B cell (primary cell): ENCODE measurements at regions of chrX and their contacts with region 1.

Region 1: GRCh38 chrX:101595739-101596419 is 21.9 kb downstream of the ARMCX6 start:
- DNase-seq: peak; percentile 73
- ATAC-seq: peak; percentile 80
- H3K4me3 ChIP-seq: no peak overlapping the region
- H3K4me3 Mint-ChIP-seq: no peak overlapping the region
- H3K27ac ChIP-seq: no peak overlapping the region
- H3K27ac Mint-ChIP-seq: peak overlapping the region; percentile 46
- H3K4me1 ChIP-seq: no peaks in the 10 kb centered on the region
- H3K4me1 Mint-ChIP-seq: peaks cover 4% of the 10 kb centered on the region
- H3K27me3 ChIP-seq: peaks cover 0 to 4% (median 2%) of the 10 kb centered on the region in 4 experiments
- H3K27me3 Mint-ChIP-seq: peaks cover 11% of the 10 kb centered on the region
- CTCF ChIP-seq: peak; percentile 71

Region 2: DNA sequence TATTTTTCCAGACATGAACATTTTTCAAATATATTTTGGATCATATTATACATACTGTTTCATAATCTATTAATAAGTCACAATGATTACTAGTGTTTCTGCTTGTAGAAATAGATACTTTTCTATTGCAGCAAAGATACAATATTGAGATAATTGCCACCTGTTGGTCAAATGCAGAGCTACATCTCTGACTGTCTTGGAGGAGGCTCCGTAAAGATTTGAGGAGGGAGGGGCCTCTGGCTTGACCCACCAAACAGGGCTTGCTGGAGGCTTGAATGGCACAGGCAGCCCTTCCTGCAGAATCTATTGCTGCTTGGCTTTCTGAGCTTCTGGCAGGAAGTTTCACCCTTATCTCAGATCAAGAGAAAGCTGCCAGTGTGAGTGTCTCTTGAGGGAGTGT is 163.1 kb after region 1 on chrX:
- CTCF ChIA-PET with region 1: interaction called, 12 read pairs
- POLR2A ChIA-PET with region 1: no interaction called
- intact Hi-C with region 1: loop called (anchors 5 kb)
- DNase-seq: peak; percentile 52
- ATAC-seq: peak; percentile 61
- H3K4me3 ChIP-seq: no peak overlapping the region
- H3K4me3 Mint-ChIP-seq: no peak overlapping the region
- H3K27ac ChIP-seq: no peak overlapping the region
- H3K27ac Mint-ChIP-seq: no peak overlapping the region
- H3K4me1 ChIP-seq: no peaks in the 10 kb centered on the region
- H3K4me1 Mint-ChIP-seq: no peaks in the 10 kb centered on the region
- H3K27me3 ChIP-seq: peaks cover 0 to 4% (median 0%) of the 10 kb centered on the region in 4 experiments
- H3K27me3 Mint-ChIP-seq: peaks cover 7% of the 10 kb centered on the region
- CTCF ChIP-seq: peak; percentile 70

Region 3: GRCh38 chrX:101799387-101799786 is 203.5 kb after region 1 on chrX:
- CTCF ChIA-PET with region 1: interaction called, 4 read pairs
- POLR2A ChIA-PET with region 1: no interaction called
- intact Hi-C with region 1: loop called (anchors 5 kb)
- DNase-seq: peak; percentile 81
- ATAC-seq: peak; percentile 98
- H3K4me3 ChIP-seq: no peak overlapping the region
- H3K4me3 Mint-ChIP-seq: peak overlapping the region; percentile 44
- H3K27ac ChIP-seq: no peak overlapping the region
- H3K27ac Mint-ChIP-seq: no peak overlapping the region
- H3K4me1 ChIP-seq: no peaks in the 10 kb centered on the region
- H3K4me1 Mint-ChIP-seq: peaks cover 3% of the 10 kb centered on the region
- H3K27me3 ChIP-seq: no peaks in the 10 kb centered on the region
- H3K27me3 Mint-ChIP-seq: no peaks in the 10 kb centered on the region
- CTCF ChIP-seq: peak; percentile 71

Region 4: GRCh38 chrX:102085706-102086105 is 489.8 kb after region 1 on chrX:
- CTCF ChIA-PET with region 1: no interaction called
- POLR2A ChIA-PET with region 1: no interaction called
- intact Hi-C with region 1: loop called (anchors 5 kb)
- DNase-seq: peak; percentile 1
- ATAC-seq: no peak
- H3K4me3 ChIP-seq: no peak overlapping the region
- H3K4me3 Mint-ChIP-seq: no peak overlapping the region
- H3K27ac ChIP-seq: no peak overlapping the region
- H3K27ac Mint-ChIP-seq: no peak overlapping the region
- H3K4me1 ChIP-seq: no peaks in the 10 kb centered on the region
- H3K4me1 Mint-ChIP-seq: no peaks in the 10 kb centered on the region
- H3K27me3 ChIP-seq: no peaks in the 10 kb centered on the region
- H3K27me3 Mint-ChIP-seq: no peaks in the 10 kb centered on the region
- CTCF ChIP-seq: no peak

Region 5: DNA sequence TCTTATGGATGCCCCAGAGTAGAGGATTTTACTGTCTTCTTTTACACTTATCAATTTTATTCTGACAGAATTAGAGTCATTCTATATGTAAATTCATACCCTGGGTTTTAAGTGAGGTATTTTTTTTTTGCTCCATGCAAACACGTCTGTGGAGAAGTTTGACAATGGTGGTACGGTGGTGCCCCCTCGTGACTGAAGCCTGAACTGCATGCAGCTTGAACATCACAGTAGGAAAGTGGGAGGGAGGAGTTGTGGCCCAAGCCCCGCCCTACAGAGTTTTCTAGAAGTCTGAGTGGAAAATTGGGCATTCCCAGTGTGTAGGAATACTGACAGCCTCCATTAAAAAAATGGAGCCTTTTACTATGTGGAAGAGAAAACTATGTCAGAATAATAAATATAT is 1267.9 kb after region 1 on chrX:
- CTCF ChIA-PET with region 1: no interaction called
- POLR2A ChIA-PET with region 1: no interaction called
- intact Hi-C with region 1: loop called (anchors 5 kb)
- DNase-seq: peak; percentile 74
- ATAC-seq: peak; percentile 98
- H3K4me3 ChIP-seq: no peak overlapping the region
- H3K4me3 Mint-ChIP-seq: no peak overlapping the region
- H3K27ac ChIP-seq: no peak overlapping the region
- H3K27ac Mint-ChIP-seq: no peak overlapping the region
- H3K4me1 ChIP-seq: no peaks in the 10 kb centered on the region
- H3K4me1 Mint-ChIP-seq: no peaks in the 10 kb centered on the region
- H3K27me3 ChIP-seq: no peaks in the 10 kb centered on the region
- H3K27me3 Mint-ChIP-seq: no peaks in the 10 kb centered on the region
- CTCF ChIP-seq: peak; percentile 82